GM12878 (cell line): ENCODE measurements at regions of chr4 and their contacts with region 1.

Region 1: DNA sequence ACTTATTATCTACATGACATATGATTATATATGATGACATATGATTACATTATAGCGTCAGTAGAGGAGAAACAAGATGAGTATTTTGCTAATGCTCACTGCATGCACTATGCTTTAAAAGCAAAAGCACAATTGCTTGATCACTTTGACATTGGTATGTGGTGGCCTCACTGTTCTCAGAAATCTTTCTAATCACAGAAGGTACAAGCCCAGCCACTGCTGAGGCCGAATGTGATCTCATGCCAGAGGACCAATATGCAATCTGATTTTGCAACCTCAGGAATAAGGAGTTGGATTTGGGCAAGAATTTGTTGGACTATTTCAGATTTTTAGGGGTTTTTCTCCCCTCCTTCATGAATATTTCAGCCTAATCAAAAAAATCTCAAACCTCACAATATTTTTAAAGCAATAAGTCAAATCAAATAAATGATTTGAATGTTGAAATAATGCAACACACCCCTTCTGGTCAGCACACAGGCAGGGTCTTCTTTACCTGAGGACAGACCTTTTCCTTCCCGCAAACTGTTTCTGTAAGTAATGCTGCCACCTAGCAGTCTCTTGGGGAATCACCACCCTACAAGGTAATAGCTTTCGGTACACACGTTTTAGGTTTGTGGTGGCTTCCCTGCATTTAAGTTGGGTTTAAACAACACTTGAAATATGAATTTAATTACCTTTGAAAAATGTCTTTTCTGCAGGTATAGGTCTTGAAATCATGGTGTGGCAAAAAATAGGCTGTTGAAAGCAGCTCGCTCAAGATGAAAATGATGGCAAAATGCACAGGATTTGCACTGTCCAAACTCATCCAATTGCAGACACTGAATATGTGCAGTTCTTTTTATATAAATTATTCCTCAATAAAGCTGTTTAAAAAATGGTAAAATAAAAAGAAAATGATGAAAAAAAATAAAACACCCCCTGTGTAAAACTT is 4.8 kb upstream of the CXCL13 start:
- DNase-seq: no peak
- ATAC-seq: peak; percentile 88
- H3K4me3 ChIP-seq: no peak overlapping the region
- H3K27ac ChIP-seq: no peak overlapping the region
- H3K4me1 ChIP-seq: no peaks in the 10 kb centered on the region
- H3K27me3 ChIP-seq: no peaks in the 10 kb centered on the region
- CTCF ChIP-seq: peak; percentile 81 to 85 (median 82)
- EP300 ChIP-seq: no peak
- POLR2A ChIP-seq: no peak
- RAD21 ChIP-seq: peak; percentile 86

Region 2: GRCh38 chr4:77367638-77368037 is 233.1 kb before region 1 on chr4:
- CTCF ChIA-PET with region 1: interaction called, 12 read pairs
- POLR2A ChIA-PET with region 1: no interaction called
- RAD21 ChIA-PET with region 1: interaction called, 14 read pairs
- SMC1A ChIA-PET with region 1: interaction called, 8 read pairs
- in situ Hi-C with region 1: no loop called
- intact Hi-C with region 1: no loop called
- DNase-seq: no peak
- ATAC-seq: peak; percentile 25; the same call in 1 of the 3 replicates
- H3K4me3 ChIP-seq: no peak overlapping the region
- H3K27ac ChIP-seq: no peak overlapping the region
- H3K4me1 ChIP-seq: no peaks in the 10 kb centered on the region
- H3K27me3 ChIP-seq: no peaks in the 10 kb centered on the region; a peak in 2 of 4 replicates
- CTCF ChIP-seq: no peak
- EP300 ChIP-seq: no peak
- POLR2A ChIP-seq: no peak
- RAD21 ChIP-seq: no peak

Region 3: DNA sequence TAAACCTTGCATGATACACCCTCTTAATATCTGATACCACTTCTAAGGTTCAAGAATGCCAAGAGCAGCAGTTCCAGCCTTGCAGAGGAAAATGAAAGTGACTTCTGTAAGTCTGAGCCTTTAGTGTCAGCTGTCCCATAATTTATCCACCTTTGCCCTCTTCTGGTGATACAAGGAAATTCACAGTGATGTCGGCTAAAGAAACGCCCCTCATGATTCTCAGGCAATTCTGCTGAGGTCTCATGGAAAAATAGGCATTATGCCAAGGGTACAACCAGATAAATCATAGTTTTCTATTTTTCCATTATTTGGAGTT is 167.4 kb before region 1 on chr4:
- CTCF ChIA-PET with region 1: interaction called, 21 read pairs
- POLR2A ChIA-PET with region 1: no interaction called
- RAD21 ChIA-PET with region 1: interaction called, 3 read pairs
- SMC1A ChIA-PET with region 1: interaction called, 21 read pairs
- in situ Hi-C with region 1: no loop called
- intact Hi-C with region 1: no loop called
- DNase-seq: peak; percentile 7
- ATAC-seq: peak; percentile 90
- H3K4me3 ChIP-seq: no peak overlapping the region
- H3K27ac ChIP-seq: no peak overlapping the region
- H3K4me1 ChIP-seq: no peaks in the 10 kb centered on the region
- H3K27me3 ChIP-seq: no peaks in the 10 kb centered on the region
- CTCF ChIP-seq: peak; percentile 46 to 50 (median 49); a peak in 5 of 6 replicates
- EP300 ChIP-seq: no peak
- POLR2A ChIP-seq: no peak
- RAD21 ChIP-seq: peak; percentile 72

Region 4: GRCh38 chr4:77473509-77473908 is 127.3 kb before region 1 on chr4:
- CTCF ChIA-PET with region 1: interaction called, 63 read pairs
- POLR2A ChIA-PET with region 1: no interaction called
- RAD21 ChIA-PET with region 1: interaction called, 6 read pairs
- SMC1A ChIA-PET with region 1: interaction called, 4 read pairs
- in situ Hi-C with region 1: no loop called
- intact Hi-C with region 1: loop called (anchors 5 kb)
- DNase-seq: no peak
- ATAC-seq: peak; percentile 59
- H3K4me3 ChIP-seq: no peak overlapping the region
- H3K27ac ChIP-seq: no peak overlapping the region
- H3K4me1 ChIP-seq: no peaks in the 10 kb centered on the region
- H3K27me3 ChIP-seq: no peaks in the 10 kb centered on the region
- CTCF ChIP-seq: peak in 2 of 3 experiments; percentile 32 to 39; a peak in 2 of 6 replicates
- EP300 ChIP-seq: no peak
- POLR2A ChIP-seq: no peak
- RAD21 ChIP-seq: peak; percentile 35

Region 5: GRCh38 chr4:77586951-77587383 is 13.8 kb before region 1 on chr4:
- CTCF ChIA-PET with region 1: interaction called, 28 read pairs
- POLR2A ChIA-PET with region 1: interaction called, 3 read pairs
- RAD21 ChIA-PET with region 1: interaction called, 5 read pairs
- SMC1A ChIA-PET with region 1: interaction called, 24 read pairs
- in situ Hi-C with region 1: no loop called
- intact Hi-C with region 1: no loop called
- DNase-seq: peak; percentile 88
- ATAC-seq: peak; percentile 98
- H3K4me3 ChIP-seq: no peak overlapping the region
- H3K27ac ChIP-seq: no peak overlapping the region
- H3K4me1 ChIP-seq: peaks cover 13% of the 10 kb centered on the region
- H3K27me3 ChIP-seq: no peaks in the 10 kb centered on the region
- CTCF ChIP-seq: no peak
- EP300 ChIP-seq: peak; percentile 57 to 81; a peak in 2 of 4 replicates
- POLR2A ChIP-seq: no peak
- RAD21 ChIP-seq: no peak

Region 6: GRCh38 chr4:77618383-77619122 is 17.8 kb after region 1 on chr4:
- CTCF ChIA-PET with region 1: interaction called, 23 read pairs
- POLR2A ChIA-PET with region 1: no interaction called
- RAD21 ChIA-PET with region 1: interaction called, 4 read pairs
- SMC1A ChIA-PET with region 1: interaction called, 6 read pairs
- in situ Hi-C with region 1: no loop called
- intact Hi-C with region 1: no loop called
- DNase-seq: no peak
- ATAC-seq: peak; percentile 99
- H3K4me3 ChIP-seq: no peak overlapping the region
- H3K27ac ChIP-seq: no peak overlapping the region
- H3K4me1 ChIP-seq: no peaks in the 10 kb centered on the region
- H3K27me3 ChIP-seq: peaks cover 0 to 3% of the 10 kb centered on the region in 2 experiments; a peak in 1 of 4 replicates
- CTCF ChIP-seq: peak; percentile 81 to 88 (median 85)
- EP300 ChIP-seq: no peak
- POLR2A ChIP-seq: no peak
- RAD21 ChIP-seq: peak; percentile 88